ENCODE measurements at regions of chr15 and their contacts with region 1.

Region 1: GRCh38 chr15:71411538-71412482 is 296.5 kb downstream of the THSD4 start:
- DNase-seq: peak in 1 of 5 donors; percentile 38
- ATAC-seq: peak; percentile 44 to 86 (median 68)
- H3K4me3 ChIP-seq: no peak overlapping the region
- H3K27ac ChIP-seq: peak overlapping the region; percentile 45 to 85 (median 72)
- H3K4me1 ChIP-seq: peaks cover 0 to 56% (median 23%) of the 10 kb centered on the region in 12 donors
- H3K27me3 ChIP-seq: no peaks in the 10 kb centered on the region
- CTCF ChIP-seq: peak in 3 of 12 donors; percentile 17 to 20 (median 19)
- POLR2A ChIP-seq: no peak

Region 2: DNA sequence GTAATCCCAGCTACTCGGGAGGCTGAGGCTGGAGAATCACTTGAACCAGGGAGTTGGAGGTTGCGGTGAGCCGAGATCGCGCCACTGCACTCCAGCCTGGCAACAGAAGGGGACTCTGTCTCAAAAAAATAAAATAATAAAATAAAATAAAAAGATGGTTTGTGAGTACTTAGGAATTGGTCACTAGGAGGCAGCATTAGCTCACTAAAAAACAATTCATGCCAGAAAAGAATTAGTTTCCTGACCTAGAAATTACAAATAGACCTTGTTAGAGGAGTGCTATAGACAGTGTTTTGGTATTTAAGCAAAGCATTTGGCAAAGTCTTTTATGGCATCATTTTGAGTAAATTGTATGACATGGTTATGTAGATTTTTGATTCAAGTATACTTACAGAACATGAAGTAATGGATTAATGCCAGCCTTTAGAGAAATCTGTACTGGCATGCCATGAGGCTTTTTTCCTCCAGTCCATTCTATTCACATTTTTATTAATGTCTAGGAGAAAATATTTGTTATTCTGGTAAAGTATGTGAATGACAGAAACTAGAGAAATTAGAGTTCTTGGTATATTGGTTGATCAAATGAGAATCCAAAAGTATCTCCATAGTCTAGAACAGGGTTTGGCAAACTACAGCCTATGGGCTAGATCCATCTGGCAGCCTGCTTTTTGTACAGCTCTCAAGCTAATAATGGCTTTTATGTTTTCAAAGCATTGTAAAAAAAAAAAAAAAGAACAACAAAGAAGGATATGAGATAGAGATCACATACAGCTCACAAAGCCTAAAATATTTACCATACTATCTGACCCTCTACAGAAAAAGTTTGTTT is 437.6 kb before region 1 on chr15:
- intact Hi-C with region 1: no loop called
- DNase-seq: no peak
- ATAC-seq: no peak
- H3K4me3 ChIP-seq: no peak overlapping the region
- H3K27ac ChIP-seq: no peak overlapping the region
- H3K4me1 ChIP-seq: no peaks in the 10 kb centered on the region
- H3K27me3 ChIP-seq: no peaks in the 10 kb centered on the region
- CTCF ChIP-seq: peak in 8 of 12 donors; percentile 6 to 45 (median 32)
- POLR2A ChIP-seq: no peak

Region 3: DNA sequence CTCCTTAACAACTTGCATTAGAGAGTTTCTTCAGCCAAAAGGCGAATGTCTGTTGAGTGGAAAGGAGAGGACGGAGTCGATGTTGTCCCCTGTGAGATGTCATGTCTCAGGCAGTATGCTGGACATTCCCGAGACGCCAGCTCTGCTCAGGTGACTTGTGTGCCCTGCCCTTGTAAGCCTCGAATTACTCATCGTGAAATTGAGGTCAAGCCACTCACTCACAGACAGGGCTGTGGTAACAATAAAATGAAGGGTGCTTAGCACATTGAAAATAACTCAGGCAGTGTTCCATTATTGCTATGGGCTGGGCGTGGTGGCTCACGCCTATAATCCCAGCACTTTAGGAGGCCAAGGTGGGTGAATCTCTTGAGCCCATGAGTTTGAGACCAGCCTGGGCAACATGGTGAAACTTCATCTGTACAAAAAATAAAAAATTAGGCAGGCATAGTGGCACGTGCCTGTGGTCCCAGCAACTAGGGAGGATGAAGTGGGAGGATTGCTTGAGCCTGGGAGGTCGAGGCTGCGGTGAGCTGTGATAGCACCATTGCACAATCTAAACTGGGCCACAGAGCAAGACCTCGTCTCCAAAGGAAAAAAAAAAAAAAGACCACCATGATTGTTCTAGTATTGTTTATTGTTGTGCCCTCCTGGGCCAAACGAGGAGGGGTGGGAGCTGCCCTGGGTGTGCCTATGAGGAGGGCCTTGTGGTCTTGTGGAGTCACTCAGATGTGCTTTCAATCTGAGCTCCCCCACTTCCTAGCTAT is 82.1 kb before region 1 on chr15:
- intact Hi-C with region 1: loop called in 2 of 10 experiments (anchors 10 kb)
- DNase-seq: peak in 3 of 5 donors; percentile 26 to 51 (median 47)
- ATAC-seq: peak; percentile 66 to 82 (median 74)
- H3K4me3 ChIP-seq: no peak overlapping the region
- H3K27ac ChIP-seq: peak overlapping the region; percentile 14 to 94 (median 78)
- H3K4me1 ChIP-seq: peaks cover 0 to 59% (median 26%) of the 10 kb centered on the region in 12 donors
- H3K27me3 ChIP-seq: no peaks in the 10 kb centered on the region
- CTCF ChIP-seq: no peak
- POLR2A ChIP-seq: no peak

Measured in heart left ventricle (tissue), 16 donors.